ENCODE measurements at regions of chr15 and their contacts with region 1.

Region 1: GRCh38 chr15:65824031-65824743 is 32.1 kb upstream of the DENND4A start:
- DNase-seq: no peak
- H3K4me3 ChIP-seq: no peak overlapping the region
- H3K27ac ChIP-seq: peak overlapping the region in 1 of 8 donors; percentile 26
- H3K4me1 ChIP-seq: peaks cover 12 to 86% (median 40%) of the 10 kb centered on the region in 6 donors
- H3K27me3 ChIP-seq: no peaks in the 10 kb centered on the region
- CTCF ChIP-seq: peak in 8 of 11 experiments; percentile 43 to 73 (median 56)
- POLR2A ChIP-seq: no peak

Region 2: DNA sequence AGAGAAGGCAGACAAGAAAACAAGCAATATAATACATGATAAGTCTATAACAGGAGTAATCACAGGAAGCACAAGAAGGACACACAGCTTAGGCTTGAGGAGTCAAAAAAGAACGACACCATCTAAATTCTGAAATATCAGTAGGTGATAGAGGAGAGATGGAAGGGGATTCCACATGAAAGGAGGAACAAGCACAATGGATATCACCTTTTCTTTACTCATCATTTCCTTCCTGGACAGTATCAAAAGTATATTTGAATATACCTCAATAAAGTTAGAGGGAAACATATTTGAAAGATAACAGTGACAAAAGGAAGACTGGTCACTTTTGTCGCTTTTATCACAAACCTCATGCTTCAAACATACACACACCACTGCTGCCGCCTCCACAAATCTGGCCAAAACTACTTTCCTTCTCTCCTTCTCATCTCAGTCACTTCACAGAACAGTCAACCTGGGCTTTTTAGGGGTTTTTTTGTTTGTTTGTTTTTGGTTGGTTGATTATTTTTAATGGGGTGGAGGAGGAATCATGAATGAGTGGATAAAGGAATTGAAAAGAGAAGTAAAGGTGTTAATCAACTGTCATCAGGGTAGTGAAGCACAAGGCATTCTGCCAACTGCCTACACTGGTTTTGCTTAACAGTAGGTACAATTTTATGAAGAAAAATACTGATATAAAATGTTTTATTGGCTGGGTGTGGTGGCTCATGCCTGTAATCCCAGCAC is 50.6 kb before region 1 on chr15:
- intact Hi-C with region 1: loop called (anchors 10 kb)
- DNase-seq: no peak
- H3K4me3 ChIP-seq: peak overlapping the region in 1 of 8 donors; percentile 25
- H3K27ac ChIP-seq: peak overlapping the region; percentile 17 to 77 (median 60)
- H3K4me1 ChIP-seq: peaks cover 26 to 99% (median 71%) of the 10 kb centered on the region in 6 donors
- H3K27me3 ChIP-seq: no peaks in the 10 kb centered on the region
- CTCF ChIP-seq: no peak
- POLR2A ChIP-seq: peak in 1 of 3 donors; percentile 38

Region 3: DNA sequence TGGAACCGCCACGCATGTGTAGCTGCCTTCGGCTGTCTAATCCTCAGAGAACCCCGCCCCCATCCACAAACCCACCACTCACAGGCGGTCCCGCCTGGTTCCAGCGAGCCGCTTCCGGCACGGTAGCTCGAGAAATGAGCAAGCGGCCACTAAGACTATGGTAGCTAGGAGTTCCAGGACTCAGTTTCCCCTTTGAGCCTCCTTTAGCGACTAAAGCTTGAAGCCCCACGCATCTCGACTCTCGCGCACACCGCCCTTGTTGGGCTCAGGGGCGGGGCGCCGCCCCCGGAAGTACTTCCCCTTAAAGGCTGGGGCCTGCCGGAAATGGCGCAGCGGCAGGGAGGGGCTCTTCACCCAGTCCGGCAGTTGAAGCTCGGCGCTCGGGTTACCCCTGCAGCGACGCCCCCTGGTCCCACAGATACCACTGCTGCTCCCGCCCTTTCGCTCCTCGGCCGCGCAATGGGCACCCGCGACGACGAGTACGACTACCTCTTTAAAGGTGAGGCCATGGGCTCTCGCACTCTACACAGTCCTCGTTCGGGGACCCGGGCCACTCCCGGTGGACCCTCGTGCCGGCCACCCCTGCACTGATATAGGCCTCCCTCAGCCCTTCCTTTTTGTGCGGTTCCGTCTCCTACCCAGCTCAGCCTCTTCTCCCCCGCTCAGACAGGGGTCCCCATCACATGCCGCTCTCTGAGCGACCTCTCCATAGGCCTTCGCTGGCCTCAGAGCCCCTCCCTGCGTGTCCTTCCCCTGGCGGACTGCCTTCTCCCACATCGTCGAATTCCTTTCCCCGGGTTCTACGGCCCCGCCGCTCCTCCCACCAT is 45.2 kb after region 1 on chr15 and contains the start of gene RAB11A:
- intact Hi-C with region 1: no loop called
- DNase-seq: peak; percentile 99
- H3K4me3 ChIP-seq: peak within 1 kb of the TSS; percentile 83 to 97 (median 88)
- H3K27ac ChIP-seq: peak within 1 kb of the TSS; percentile 93 to 99 (median 96)
- H3K4me1 ChIP-seq: peaks cover 19 to 50% (median 40%) of the 10 kb centered on the region in 6 donors
- H3K27me3 ChIP-seq: no peaks in the 10 kb centered on the region
- CTCF ChIP-seq: peak; percentile 19 to 71 (median 48)
- POLR2A ChIP-seq: peak in 2 of 3 donors; percentile 84 to 91
- total RNA-seq, gene RAB11A: 173 to 313 (median 255) TPM

Measured in spleen (tissue), 13 donors.